Activated T-helper 1 cell treated with anti-CD3 and anti-CD28 coated beads, Interleukin-12 subunit alpha, Interleukin-12 subunit beta, Interleukin-2, Interleukin-4 antibody, amounts not matched to agents 30 ng/mL and 10 ng/mL and 1 ng/mL, durations not matched to agents 14 hours and 24 hours and 36 hours (primary cell): ENCODE measurements at regions of chr2 and their contacts with region 1.

Region 1: DNA sequence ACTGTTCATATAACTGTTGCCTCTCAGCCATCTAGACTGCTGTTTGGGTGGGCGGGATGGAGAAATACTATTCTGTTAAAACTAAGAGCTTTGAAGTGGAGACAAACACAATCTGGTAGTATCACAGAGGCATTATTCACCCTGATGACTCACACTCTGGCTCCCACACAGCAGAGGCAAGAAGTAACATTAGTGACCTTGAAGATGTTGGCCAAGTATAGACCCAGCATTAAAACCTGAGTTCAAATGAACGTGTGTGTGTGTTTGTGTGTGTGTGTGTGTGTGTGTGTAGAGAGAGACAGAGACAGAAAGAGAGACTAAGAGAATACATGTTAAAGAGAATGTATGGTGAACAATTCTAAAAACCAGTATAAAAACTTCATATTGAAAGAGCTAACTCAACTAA is 22.5 kb upstream of the ACVR1 start:
- DNase-seq: peak; percentile 43
- H3K4me3 Mint-ChIP-seq: peak overlapping the region; percentile 82
- H3K27ac Mint-ChIP-seq: peak overlapping the region; percentile 97
- H3K4me1 Mint-ChIP-seq: peaks cover 79% of the 10 kb centered on the region
- H3K27me3 Mint-ChIP-seq: no peaks in the 10 kb centered on the region

Region 2: GRCh38 chr2:157312866-157313486 is 585.6 kb before region 1 on chr2:
- intact Hi-C with region 1: loop called (anchors 5 kb)
- DNase-seq: no peak
- H3K4me3 Mint-ChIP-seq: no peak overlapping the region
- H3K27ac Mint-ChIP-seq: no peak overlapping the region
- H3K4me1 Mint-ChIP-seq: peaks cover 20% of the 10 kb centered on the region
- H3K27me3 Mint-ChIP-seq: peaks cover 1% of the 10 kb centered on the region

Region 3: GRCh38 chr2:157443795-157444640 is 454.6 kb before region 1 on chr2 and contains the start of gene CYTIP:
- intact Hi-C with region 1: loop called (anchors 1 kb)
- DNase-seq: peak; percentile 73
- H3K4me3 Mint-ChIP-seq: peak within 1 kb of the TSS; percentile 98
- H3K27ac Mint-ChIP-seq: peak within 1 kb of the TSS; percentile 99
- H3K4me1 Mint-ChIP-seq: peaks cover 58% of the 10 kb centered on the region
- H3K27me3 Mint-ChIP-seq: no peaks in the 10 kb centered on the region
- total RNA-seq, gene CYTIP: 296 and 302 TPM in 2 replicates

Region 4: DNA sequence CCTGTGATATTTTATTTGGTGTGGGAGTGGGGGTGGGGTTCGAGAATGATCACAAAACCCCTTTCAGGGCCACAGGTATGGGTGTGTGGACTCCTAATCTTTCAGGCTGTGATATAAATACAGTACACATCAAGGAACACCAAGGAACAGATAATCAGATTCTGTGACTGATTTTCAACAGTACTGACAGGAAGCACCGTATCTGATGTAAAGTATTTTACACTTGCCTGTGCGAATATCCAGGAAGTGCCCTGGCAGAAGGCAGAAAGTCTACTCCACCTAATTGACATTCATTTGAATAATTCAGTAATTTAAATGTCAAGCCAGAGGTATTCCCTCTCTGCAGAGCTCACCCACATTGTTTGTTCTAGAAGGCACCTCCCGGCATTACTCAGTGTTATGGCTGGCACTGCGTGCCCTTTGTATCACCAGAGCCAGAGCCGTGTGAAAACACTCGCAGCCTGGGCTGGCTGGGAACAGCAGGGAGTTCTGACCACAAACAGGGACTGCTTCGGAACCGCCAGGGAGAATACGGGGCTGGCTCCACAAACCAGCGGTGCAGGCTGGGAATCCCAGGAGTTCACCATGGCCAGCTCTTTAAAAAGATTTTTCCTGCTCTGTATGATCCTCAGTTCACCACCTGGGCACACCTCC is 114.3 kb before region 1 on chr2:
- intact Hi-C with region 1: loop called (anchors 1 kb)
- DNase-seq: no peak
- H3K4me3 Mint-ChIP-seq: peak overlapping the region; percentile 37
- H3K27ac Mint-ChIP-seq: peak overlapping the region; percentile 32
- H3K4me1 Mint-ChIP-seq: peaks cover 87% of the 10 kb centered on the region
- H3K27me3 Mint-ChIP-seq: no peaks in the 10 kb centered on the region

Region 5: GRCh38 chr2:157876066-157876787 is 22.4 kb before region 1 on chr2 and contains the start of gene ACVR1:
- intact Hi-C with region 1: loop called (anchors 1 kb)
- DNase-seq: peak; percentile 80
- H3K4me3 Mint-ChIP-seq: peak within 1 kb of the TSS; percentile 98
- H3K27ac Mint-ChIP-seq: peak within 1 kb of the TSS; percentile 96
- H3K4me1 Mint-ChIP-seq: peaks cover 65% of the 10 kb centered on the region
- H3K27me3 Mint-ChIP-seq: no peaks in the 10 kb centered on the region
- total RNA-seq, gene ACVR1: 44.0 and 46.5 TPM in 2 replicates

Region 6: DNA sequence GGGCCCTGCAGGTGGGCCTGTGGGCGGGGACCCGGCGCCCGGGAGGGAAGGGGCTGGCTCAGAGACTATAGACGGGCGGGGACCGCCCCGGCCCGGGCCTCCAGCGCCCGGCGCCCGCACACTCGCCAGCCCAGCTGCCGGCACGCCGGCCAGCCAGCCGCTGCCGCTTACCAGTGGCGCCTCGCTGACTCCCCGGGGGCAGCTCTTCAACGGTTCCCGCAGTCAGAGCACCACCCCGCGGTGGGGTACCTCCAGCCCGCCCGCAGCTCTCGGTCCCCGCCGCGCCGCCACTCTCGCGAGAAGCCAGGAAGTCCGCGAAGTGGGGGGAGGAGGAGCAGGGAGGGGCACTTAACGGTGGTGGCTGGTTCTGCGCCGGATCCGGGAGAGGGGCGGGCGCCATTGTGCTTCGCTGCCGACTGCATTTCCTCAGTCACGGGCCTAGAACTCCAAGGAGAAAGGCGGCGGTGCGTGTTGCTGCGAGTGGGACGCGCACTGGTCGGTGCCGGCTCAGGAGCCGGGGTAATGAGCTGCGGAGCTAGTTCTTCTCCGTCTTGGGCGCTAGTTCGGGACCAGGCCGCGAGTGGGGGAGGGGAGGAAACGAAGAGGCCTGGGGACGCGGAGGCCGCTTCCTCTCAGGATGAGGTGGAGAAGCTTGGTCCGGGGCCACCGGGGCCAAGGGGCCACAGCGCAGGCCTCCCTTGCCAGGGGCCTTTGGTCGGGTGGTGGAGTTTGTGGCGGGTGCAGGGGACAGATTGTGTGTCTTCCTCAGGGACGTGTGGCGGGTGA is 1813.7 kb after region 1 on chr2 and contains the start of gene MARCHF7:
- intact Hi-C with region 1: loop called (anchors 5 kb)
- DNase-seq: peak; percentile 96
- H3K4me3 Mint-ChIP-seq: peak within 1 kb of the TSS; percentile 98
- H3K27ac Mint-ChIP-seq: peak within 1 kb of the TSS; percentile 98
- H3K4me1 Mint-ChIP-seq: peaks cover 44% of the 10 kb centered on the region
- H3K27me3 Mint-ChIP-seq: no peaks in the 10 kb centered on the region
- total RNA-seq, gene MARCHF7: 76.5 and 80.3 TPM in 2 replicates